Caco-2 (cell line): ENCODE measurements at regions of chr21 and their contacts with region 1.

Region 1: GRCh38 chr21:28357743-28358142 is 634.9 kb downstream of the LTN1 start:
- DNase-seq: no peak
- H3K4me3 ChIP-seq: no peak overlapping the region
- H3K4me3 Mint-ChIP-seq: no peak overlapping the region
- H3K27ac Mint-ChIP-seq: no peak overlapping the region
- H3K4me1 ChIP-seq: no peaks in the 10 kb centered on the region
- H3K4me1 Mint-ChIP-seq: no peaks in the 10 kb centered on the region
- H3K27me3 ChIP-seq: no peaks in the 10 kb centered on the region
- H3K27me3 Mint-ChIP-seq: no peaks in the 10 kb centered on the region
- CTCF ChIP-seq: no peak

Region 2: DNA sequence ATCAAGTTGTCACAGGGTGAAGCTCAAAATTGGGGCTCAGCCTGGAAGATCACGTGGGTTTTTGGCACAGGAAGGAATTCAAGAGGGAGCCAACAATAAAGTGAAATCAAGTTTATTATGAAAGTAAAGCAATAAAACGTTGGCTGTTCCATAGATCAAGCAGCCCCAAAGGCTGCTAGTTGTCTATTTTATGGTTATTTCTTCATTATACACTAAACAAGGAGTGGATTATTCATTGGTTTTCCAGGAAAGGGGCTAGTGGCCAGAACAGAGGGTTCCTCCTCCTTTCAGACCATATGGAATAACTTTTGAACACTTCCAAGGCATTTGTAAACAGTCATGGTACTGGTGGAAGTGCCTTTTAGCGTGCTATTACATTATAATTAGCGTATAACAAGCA is 667.3 kb before region 1 on chr21:
- CTCF ChIA-PET with region 1: no interaction called
- POLR2A ChIA-PET with region 1: no interaction called
- intact Hi-C with region 1: no loop called
- DNase-seq: no peak
- H3K4me3 ChIP-seq: no peak overlapping the region
- H3K4me3 Mint-ChIP-seq: no peak overlapping the region
- H3K27ac Mint-ChIP-seq: no peak overlapping the region
- H3K4me1 ChIP-seq: no peaks in the 10 kb centered on the region
- H3K4me1 Mint-ChIP-seq: no peaks in the 10 kb centered on the region
- H3K27me3 ChIP-seq: no peaks in the 10 kb centered on the region
- H3K27me3 Mint-ChIP-seq: peaks cover 6% of the 10 kb centered on the region
- CTCF ChIP-seq: no peak

Region 3: DNA sequence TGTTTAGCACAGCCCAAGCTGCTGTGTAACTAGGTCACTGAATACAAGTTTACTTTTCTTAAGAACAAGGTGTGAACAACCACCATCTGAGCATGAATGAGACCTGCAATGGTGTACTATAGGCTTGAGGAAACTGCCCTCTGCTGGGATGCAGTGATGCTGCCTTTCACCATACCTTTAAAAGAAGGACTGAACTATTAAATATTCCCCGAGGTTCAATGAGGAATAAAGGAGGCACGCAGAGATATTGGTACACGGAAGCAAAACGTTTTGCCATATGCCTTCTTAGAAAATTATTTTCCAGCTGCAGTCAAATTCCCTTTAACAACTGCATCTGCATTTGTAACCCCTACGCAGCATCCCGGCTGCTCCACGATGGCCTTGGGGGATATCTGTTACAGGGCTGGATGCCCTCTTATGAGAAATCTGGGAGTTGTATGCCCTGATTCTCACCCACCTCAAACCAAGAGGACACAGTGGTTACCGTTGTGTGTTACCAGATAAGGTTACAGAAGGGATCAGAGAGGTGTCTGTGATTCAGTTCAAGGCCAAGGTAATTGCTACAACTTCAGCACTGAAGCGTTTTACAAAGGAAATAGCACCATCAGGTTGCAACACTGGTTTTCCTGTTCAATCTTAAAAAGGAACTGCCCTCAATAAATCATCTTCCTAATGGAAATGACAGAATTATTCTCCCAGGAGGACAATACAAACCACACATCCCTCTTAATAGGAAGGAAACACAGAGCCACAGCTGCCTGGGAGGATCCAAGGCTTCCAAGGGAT is 164.5 kb after region 1 on chr21:
- CTCF ChIA-PET with region 1: no interaction called
- POLR2A ChIA-PET with region 1: no interaction called
- intact Hi-C with region 1: loop called (anchors 5 kb)
- DNase-seq: peak in 1 of 2 experiments; percentile 12
- H3K4me3 ChIP-seq: no peak overlapping the region
- H3K4me3 Mint-ChIP-seq: no peak overlapping the region
- H3K27ac Mint-ChIP-seq: no peak overlapping the region
- H3K4me1 ChIP-seq: no peaks in the 10 kb centered on the region
- H3K4me1 Mint-ChIP-seq: no peaks in the 10 kb centered on the region
- H3K27me3 ChIP-seq: no peaks in the 10 kb centered on the region
- H3K27me3 Mint-ChIP-seq: no peaks in the 10 kb centered on the region
- CTCF ChIP-seq: peak; percentile 35 to 42